Sigmoid colon (tissue), 7 donors: ENCODE measurements at regions of chr5 and their contacts with region 1.

Region 1: GRCh38 chr5:33235824-33236223 is 204.9 kb upstream of the TARS1 start:
- DNase-seq: no peak
- H3K4me3 ChIP-seq: no peak overlapping the region
- H3K27ac ChIP-seq: no peak overlapping the region
- H3K4me1 ChIP-seq: peaks cover 0 to 40% (median 16%) of the 10 kb centered on the region in 4 donors
- H3K27me3 ChIP-seq: no peaks in the 10 kb centered on the region
- CTCF ChIP-seq: no peak
- EP300 ChIP-seq: no peak
- POLR2A ChIP-seq: no peak

Region 2: DNA sequence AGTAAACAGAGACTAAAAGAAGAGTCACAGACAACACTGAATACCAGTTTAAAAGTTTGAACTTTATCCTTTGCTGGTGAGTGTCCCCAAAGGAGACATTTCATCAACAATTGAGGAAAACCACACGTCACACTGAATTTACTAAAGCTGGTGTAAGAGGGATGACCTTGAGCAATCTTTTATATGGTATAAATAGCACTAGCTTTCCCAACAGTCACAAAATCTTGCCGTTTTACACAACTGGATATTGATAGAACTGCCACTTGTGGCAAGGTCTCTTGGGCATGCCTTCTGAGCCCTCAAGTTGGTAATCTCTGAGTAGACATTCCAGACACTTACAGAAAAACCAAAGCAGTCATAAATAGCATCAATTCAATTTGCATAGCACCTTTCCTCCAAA is 106.5 kb before region 1 on chr5:
- intact Hi-C with region 1: no loop called
- DNase-seq: no peak
- H3K4me3 ChIP-seq: no peak overlapping the region
- H3K27ac ChIP-seq: no peak overlapping the region
- H3K4me1 ChIP-seq: no peaks in the 10 kb centered on the region
- H3K27me3 ChIP-seq: no peaks in the 10 kb centered on the region
- CTCF ChIP-seq: no peak
- EP300 ChIP-seq: no peak
- POLR2A ChIP-seq: no peak

Region 3: DNA sequence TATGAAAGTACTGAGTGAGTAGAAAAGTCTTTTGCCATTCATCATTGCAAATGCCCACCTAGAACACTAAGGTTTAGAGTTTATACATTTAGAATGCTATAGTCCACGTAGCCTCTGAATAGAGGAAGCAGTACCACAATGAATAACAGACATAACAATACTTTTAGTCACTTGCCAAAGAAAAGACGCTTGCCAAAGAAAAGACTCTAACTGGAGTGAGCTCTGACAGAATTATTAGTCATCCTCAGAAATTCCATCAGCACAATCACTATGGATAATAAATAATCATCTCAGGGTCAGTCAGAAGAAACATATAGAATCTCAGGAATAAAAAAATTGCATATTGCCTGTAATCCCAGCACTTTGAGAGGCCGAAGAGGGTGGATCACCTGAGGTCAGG is 36.5 kb after region 1 on chr5:
- intact Hi-C with region 1: loop called (anchors 5 kb)
- DNase-seq: no peak
- H3K4me3 ChIP-seq: no peak overlapping the region
- H3K27ac ChIP-seq: no peak overlapping the region
- H3K4me1 ChIP-seq: peaks cover 0 to 12% (median 4%) of the 10 kb centered on the region in 4 donors
- H3K27me3 ChIP-seq: no peaks in the 10 kb centered on the region
- CTCF ChIP-seq: no peak
- EP300 ChIP-seq: no peak
- POLR2A ChIP-seq: no peak

Region 4: GRCh38 chr5:33299621-33300208 is 63.9 kb after region 1 on chr5:
- intact Hi-C with region 1: loop called (anchors 5 kb)
- DNase-seq: no peak
- H3K4me3 ChIP-seq: no peak overlapping the region
- H3K27ac ChIP-seq: peak overlapping the region in 3 of 4 donors; percentile 62 to 66 (median 65)
- H3K4me1 ChIP-seq: peaks cover 0 to 36% (median 18%) of the 10 kb centered on the region in 4 donors
- H3K27me3 ChIP-seq: no peaks in the 10 kb centered on the region
- CTCF ChIP-seq: peak; percentile 13 to 41 (median 32)
- EP300 ChIP-seq: peak in 1 of 4 donors; percentile 48
- POLR2A ChIP-seq: no peak